SK-N-SH (cell line): ENCODE measurements at regions of chr11 and their contacts with region 1.

Region 1: GRCh38 chr11:35237860-35238715 is 99.1 kb downstream of the CD44 start:
- DNase-seq: peak; percentile 15
- H3K4me3 ChIP-seq: no peak overlapping the region
- H3K27ac ChIP-seq: no peak overlapping the region; a peak in 1 of 4 replicates
- H3K4me1 ChIP-seq: peaks cover 0 to 2% of the 10 kb centered on the region in 2 experiments; a peak in 2 of 4 replicates
- H3K27me3 ChIP-seq: no peaks in the 10 kb centered on the region
- CTCF ChIP-seq: peak; percentile 73
- EP300 ChIP-seq: no peak
- RAD21 ChIP-seq: peak; percentile 78

Region 2: GRCh38 chr11:34907934-34908593 is 330.0 kb before region 1 on chr11:
- CTCF ChIA-PET with region 1: no interaction called
- POLR2A ChIA-PET with region 1: no interaction called
- DNase-seq: no peak
- H3K4me3 ChIP-seq: no peak overlapping the region
- H3K27ac ChIP-seq: no peak overlapping the region
- H3K4me1 ChIP-seq: no peaks in the 10 kb centered on the region; a peak in 1 of 4 replicates
- H3K27me3 ChIP-seq: no peaks in the 10 kb centered on the region
- CTCF ChIP-seq: no peak
- EP300 ChIP-seq: no peak
- RAD21 ChIP-seq: no peak

Region 3: GRCh38 chr11:35223371-35223796 is 14.7 kb before region 1 on chr11:
- CTCF ChIA-PET with region 1: interaction called, 18 read pairs
- POLR2A ChIA-PET with region 1: no interaction called
- DNase-seq: peak; percentile 81
- H3K4me3 ChIP-seq: no peak overlapping the region; a peak in 1 of 4 replicates
- H3K27ac ChIP-seq: peak overlapping the region; percentile 63 to 90
- H3K4me1 ChIP-seq: peaks cover 14 to 34% of the 10 kb centered on the region in 2 experiments
- H3K27me3 ChIP-seq: no peaks in the 10 kb centered on the region
- CTCF ChIP-seq: no peak
- EP300 ChIP-seq: peak; percentile 56 to 81; a peak in 1 of 4 replicates
- RAD21 ChIP-seq: peak; percentile 40; the same call in 1 of the 2 replicates